HEK293 (cell line): ENCODE measurements at regions of chr17 and their contacts with region 1.

Region 1: DNA sequence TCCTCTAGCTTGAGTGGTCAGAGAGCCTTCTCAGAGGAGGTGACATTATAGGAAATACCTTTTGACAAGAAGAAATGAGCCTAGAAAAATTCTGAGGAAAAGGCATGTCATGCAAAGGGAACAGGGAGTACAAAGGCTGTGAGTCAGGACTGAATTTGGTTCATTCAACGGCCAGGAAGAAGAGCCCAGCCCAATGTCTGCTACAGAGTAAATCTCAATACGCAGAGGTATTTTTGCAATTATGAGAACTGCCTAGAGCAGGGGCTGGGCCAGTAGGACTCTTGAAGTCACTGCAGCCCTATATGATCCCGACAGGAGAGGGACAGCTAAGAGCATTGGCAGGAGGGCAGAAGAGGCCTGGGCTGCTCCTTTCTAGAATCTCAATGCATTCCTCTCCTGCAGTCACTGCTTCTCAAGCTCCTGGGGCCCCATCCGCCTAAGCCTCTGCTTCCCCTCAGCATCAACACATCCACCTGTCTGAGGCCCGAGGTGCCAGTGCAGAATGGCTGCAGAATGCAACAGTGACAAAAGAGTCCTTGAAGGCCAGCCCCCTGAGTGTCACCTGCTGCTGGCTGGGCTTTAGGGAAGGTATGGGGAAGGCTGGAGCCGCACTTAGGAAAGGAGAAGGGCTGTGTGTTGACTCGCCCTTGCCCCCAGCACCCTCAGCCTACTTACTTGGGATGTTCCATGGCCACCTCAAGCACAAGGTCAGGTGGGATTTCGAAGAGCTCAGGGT is 20.1 kb downstream of the NOS2 start:
- H3K4me3 ChIP-seq: no peak overlapping the region
- H3K27ac ChIP-seq: 0 out of 2 replicates have a peak overlapping the region, but pooled peaks have one; percentile 3
- H3K4me1 ChIP-seq: no peaks in the 10 kb centered on the region
- CTCF ChIP-seq: no peak

Region 2: DNA sequence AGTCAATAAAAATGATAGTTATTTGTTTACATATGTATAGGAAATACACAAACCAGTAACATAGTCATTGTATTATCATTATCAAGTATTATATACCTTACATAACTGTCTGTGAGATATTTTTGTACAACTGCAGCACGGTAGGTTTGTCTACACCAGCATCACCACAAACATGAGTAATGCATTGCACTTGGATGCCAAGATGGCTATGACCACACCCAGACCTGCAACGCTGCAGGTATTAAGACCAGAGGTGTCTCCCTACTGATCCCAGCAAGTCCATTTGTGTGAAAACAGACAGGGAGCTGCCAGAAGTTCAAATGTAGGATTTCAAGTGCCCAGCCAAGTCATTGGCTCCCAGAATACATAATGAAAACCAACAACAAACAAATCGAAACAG is 54.3 kb after region 1 on chr17:
- CTCF ChIA-PET with region 1: no interaction called
- POLR2A ChIA-PET with region 1: no interaction called
- H3K4me3 ChIP-seq: no peak overlapping the region
- H3K27ac ChIP-seq: no peak overlapping the region
- H3K4me1 ChIP-seq: no peaks in the 10 kb centered on the region
- CTCF ChIP-seq: no peak

Region 3: DNA sequence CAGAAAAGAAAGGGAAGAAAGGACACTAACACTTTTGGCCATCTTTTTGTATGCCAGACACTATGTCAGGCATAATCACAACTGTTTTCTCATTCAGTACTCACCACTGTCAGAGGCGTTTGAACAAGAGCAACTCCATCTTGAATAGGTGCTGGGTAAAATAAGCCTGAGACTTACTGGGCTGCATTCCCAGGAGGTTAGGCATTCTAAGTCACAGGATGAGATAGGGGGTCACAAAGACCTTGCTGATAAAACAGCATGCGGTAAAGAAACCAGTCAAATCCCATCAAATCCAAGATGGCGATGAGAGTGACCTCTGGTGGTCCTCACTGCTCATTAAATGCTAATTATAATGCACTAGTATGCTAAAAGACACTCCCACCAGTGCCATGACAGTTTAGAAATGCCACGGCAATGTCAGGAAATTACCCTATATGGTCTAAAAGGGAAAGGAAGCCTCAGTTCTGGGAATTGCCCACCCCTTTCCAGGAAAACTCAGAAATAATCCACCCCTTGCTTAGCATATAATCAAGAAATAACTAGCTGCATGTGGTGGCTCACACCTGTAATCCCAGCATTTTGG is 127.8 kb after region 1 on chr17:
- CTCF ChIA-PET with region 1: interaction called, 12 read pairs
- POLR2A ChIA-PET with region 1: no interaction called
- H3K4me3 ChIP-seq: no peak overlapping the region
- H3K27ac ChIP-seq: no peak overlapping the region
- H3K4me1 ChIP-seq: no peaks in the 10 kb centered on the region
- CTCF ChIP-seq: no peak